ENCODE measurements at regions of chr1 and their contacts with region 1.

Region 1: DNA sequence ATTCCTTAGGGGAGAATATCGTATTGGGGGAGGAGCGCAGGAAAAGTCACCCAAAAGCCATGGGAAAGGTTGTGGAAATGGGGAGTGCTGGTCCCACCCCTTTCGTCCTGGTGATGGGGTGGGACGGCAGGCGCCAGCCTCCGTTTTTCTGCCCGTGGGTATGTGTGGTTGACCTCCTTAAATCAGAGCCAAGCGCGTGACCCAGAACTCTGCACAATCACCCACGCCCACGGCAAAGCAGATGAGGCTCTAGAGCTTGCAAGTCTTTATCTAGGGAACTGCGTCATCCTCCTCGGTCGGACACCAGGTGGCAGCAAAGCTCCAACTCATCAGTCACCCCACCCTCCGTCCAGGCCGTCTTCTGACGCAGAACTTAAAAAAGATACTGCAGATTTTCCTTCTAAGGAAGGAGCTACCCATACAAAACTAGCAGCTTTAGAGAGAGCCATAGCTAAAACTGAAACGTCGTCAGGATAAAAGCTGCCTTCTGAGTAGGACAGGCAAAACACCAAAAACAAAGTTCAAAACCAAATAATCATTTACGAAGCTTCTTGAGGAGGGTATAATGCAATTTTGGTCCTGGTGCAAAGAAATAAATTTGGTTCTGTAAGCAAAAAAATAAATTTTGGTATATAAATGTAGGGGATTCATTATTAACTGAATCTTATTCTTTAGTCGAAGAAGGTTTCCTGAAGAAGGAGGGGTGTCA is 62.0 kb downstream of the TBX19 start:
- DNase-seq: peak; percentile 61
- ATAC-seq: peak; percentile 98
- H3K4me3 ChIP-seq: no peak overlapping the region
- H3K27ac ChIP-seq: no peak overlapping the region
- H3K4me1 ChIP-seq: peaks cover 10% of the 10 kb centered on the region
- H3K27me3 ChIP-seq: no peaks in the 10 kb centered on the region
- CTCF ChIP-seq: peak; percentile 73 to 91 (median 82)
- EP300 ChIP-seq: no peak
- POLR2A ChIP-seq: no peak
- RAD21 ChIP-seq: peak; percentile 86

Region 2: GRCh38 chr1:168121401-168122011 is 221.2 kb before region 1 on chr1:
- CTCF ChIA-PET with region 1: no interaction called
- POLR2A ChIA-PET with region 1: no interaction called
- RAD21 ChIA-PET with region 1: no interaction called
- SMC1A ChIA-PET with region 1: no interaction called
- in situ Hi-C with region 1: no loop called
- intact Hi-C with region 1: no loop called
- DNase-seq: no peak
- ATAC-seq: no peak
- H3K4me3 ChIP-seq: no peak overlapping the region
- H3K27ac ChIP-seq: no peak overlapping the region
- H3K4me1 ChIP-seq: no peaks in the 10 kb centered on the region
- H3K27me3 ChIP-seq: peaks cover 0 to 3% of the 10 kb centered on the region in 2 experiments; a peak in 3 of 4 replicates
- CTCF ChIP-seq: no peak
- EP300 ChIP-seq: no peak
- POLR2A ChIP-seq: no peak
- RAD21 ChIP-seq: no peak

Region 3: DNA sequence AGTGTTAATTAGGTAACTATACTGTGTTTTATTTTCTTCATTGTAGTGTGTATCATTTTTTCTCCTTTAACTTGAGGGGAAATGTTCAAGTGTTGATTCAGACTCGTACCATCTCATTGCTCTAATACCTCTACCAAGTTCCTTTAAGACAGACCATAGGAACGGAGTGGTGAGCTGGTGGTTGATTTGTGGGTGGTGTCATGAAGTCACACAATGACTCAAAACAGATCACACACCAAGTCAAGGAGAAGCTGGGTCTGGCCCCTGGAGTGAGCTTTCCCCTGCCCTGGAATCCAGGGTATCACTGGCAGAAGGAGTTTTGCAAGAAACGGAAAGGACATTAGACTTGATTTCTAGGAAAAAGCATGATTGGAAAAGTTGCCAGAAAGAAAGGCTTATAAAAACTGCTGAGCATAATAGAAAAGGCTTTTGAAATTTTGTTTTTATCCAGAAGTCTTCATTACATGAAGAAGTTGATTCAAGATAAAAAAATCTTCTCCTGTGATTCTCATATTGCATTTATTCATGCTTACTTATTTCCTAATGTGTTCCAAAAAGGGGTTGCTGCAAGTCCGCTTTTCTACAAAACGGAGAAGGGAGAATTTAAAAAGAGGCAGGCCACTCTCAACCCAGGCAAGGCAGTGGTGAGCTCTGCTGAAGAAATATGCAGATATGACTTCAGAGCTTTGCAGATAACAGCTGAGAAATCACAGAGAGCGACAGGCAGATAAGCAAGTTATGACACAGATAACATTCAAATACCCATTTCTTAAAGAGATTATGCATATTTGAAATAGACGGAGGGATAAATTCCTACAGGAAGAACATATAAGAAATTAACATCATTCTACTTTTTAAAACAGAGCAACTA is 17.7 kb after region 1 on chr1:
- CTCF ChIA-PET with region 1: interaction called, 44 read pairs
- POLR2A ChIA-PET with region 1: no interaction called
- RAD21 ChIA-PET with region 1: interaction called, 18 read pairs
- SMC1A ChIA-PET with region 1: interaction called, 21 read pairs
- in situ Hi-C with region 1: no loop called
- intact Hi-C with region 1: no loop called
- DNase-seq: no peak
- ATAC-seq: peak; percentile 51; the same call in 2 of the 3 replicates
- H3K4me3 ChIP-seq: no peak overlapping the region
- H3K27ac ChIP-seq: no peak overlapping the region
- H3K4me1 ChIP-seq: no peaks in the 10 kb centered on the region
- H3K27me3 ChIP-seq: no peaks in the 10 kb centered on the region; a peak in 1 of 4 replicates
- CTCF ChIP-seq: no peak
- EP300 ChIP-seq: no peak
- POLR2A ChIP-seq: no peak
- RAD21 ChIP-seq: no peak

Region 4: DNA sequence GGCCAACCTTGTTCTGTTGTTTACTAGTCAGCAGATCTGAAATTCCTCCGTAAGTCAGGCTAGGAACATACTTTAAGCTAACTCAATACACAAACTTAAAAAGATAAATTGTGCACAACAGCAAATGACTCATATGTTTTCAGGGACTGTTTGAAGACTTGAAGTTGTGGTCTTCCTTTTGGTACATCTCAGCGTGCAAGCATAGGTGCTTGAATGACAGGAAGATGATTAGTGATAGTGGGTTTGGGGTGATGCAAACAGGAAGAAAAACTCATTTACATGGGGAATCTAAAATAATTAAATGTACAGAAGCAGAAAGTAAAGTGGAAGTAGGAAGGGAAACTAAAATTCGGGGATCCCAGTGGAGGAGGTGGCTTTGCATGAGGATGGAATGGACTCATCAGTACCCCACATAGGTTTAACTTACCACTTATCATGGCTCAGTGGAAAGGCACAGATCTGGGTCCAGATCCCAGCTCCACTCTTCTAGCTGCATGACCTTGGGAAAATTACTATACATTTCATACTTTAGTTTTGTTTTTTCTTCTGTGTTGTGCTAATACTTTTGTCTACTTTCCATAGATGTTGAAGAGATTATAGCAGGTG is 78.8 kb after region 1 on chr1:
- CTCF ChIA-PET with region 1: interaction called, 28 read pairs
- POLR2A ChIA-PET with region 1: no interaction called
- RAD21 ChIA-PET with region 1: interaction called, 23 read pairs
- SMC1A ChIA-PET with region 1: interaction called, 27 read pairs
- in situ Hi-C with region 1: no loop called
- intact Hi-C with region 1: no loop called
- DNase-seq: no peak
- ATAC-seq: peak; percentile 74
- H3K4me3 ChIP-seq: no peak overlapping the region
- H3K27ac ChIP-seq: no peak overlapping the region
- H3K4me1 ChIP-seq: no peaks in the 10 kb centered on the region
- H3K27me3 ChIP-seq: no peaks in the 10 kb centered on the region; a peak in 2 of 4 replicates
- CTCF ChIP-seq: no peak
- EP300 ChIP-seq: no peak
- POLR2A ChIP-seq: no peak
- RAD21 ChIP-seq: no peak

Region 5: GRCh38 chr1:168466092-168466713 is 123.5 kb after region 1 on chr1:
- CTCF ChIA-PET with region 1: interaction called, 14 read pairs
- POLR2A ChIA-PET with region 1: no interaction called
- RAD21 ChIA-PET with region 1: interaction called, 10 read pairs
- SMC1A ChIA-PET with region 1: interaction called, 6 read pairs
- in situ Hi-C with region 1: no loop called
- intact Hi-C with region 1: no loop called
- DNase-seq: peak; percentile 88
- ATAC-seq: peak; percentile 89
- H3K4me3 ChIP-seq: peak overlapping the region; percentile 25; the same call in 1 of the 2 replicates
- H3K27ac ChIP-seq: peak overlapping the region; percentile 56
- H3K4me1 ChIP-seq: peaks cover 25% of the 10 kb centered on the region
- H3K27me3 ChIP-seq: no peaks in the 10 kb centered on the region
- CTCF ChIP-seq: no peak
- EP300 ChIP-seq: peak; percentile 23 to 46; a peak in 1 of 4 replicates
- POLR2A ChIP-seq: no peak
- RAD21 ChIP-seq: no peak

Region 6: DNA sequence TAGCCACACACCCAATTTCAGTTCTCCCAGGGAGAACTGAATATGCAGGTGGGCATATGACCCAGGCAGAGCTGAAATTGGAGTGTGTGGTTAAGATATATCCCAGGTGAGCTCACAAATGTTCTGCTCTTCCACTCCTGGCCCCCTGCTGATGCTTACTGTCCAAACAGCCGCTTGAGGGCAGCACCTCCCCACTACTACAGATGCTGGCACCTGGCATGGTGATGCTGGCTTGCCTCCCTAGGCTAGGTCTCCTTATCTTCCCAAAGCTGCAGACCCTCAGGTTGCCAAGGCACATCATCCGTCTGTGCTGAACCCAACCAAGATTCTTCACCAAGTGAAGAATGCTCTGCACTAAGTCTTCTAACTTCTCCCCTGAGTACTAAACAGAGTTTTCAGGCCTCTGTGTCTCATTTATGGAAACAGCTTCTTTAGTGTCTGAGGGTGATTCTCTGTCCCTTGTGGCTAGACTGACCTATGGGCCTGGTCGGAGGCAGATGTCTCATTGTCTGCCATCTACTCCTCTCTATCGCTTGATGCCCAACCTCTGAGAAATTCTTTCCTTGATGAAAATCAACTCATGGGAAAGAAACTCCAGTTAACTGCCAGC is 260.9 kb after region 1 on chr1:
- CTCF ChIA-PET with region 1: interaction called, 82 read pairs
- POLR2A ChIA-PET with region 1: no interaction called
- RAD21 ChIA-PET with region 1: interaction called, 97 read pairs
- SMC1A ChIA-PET with region 1: interaction called, 128 read pairs
- in situ Hi-C with region 1: no loop called
- intact Hi-C with region 1: no loop called
- DNase-seq: peak; percentile 7
- ATAC-seq: peak; percentile 99
- H3K4me3 ChIP-seq: no peak overlapping the region
- H3K27ac ChIP-seq: no peak overlapping the region
- H3K4me1 ChIP-seq: no peaks in the 10 kb centered on the region
- H3K27me3 ChIP-seq: no peaks in the 10 kb centered on the region; a peak in 1 of 4 replicates
- CTCF ChIP-seq: peak; percentile 76 to 92 (median 80)
- EP300 ChIP-seq: no peak
- POLR2A ChIP-seq: no peak
- RAD21 ChIP-seq: peak; percentile 97

Region 7: GRCh38 chr1:169295425-169295824 is 952.7 kb after region 1 on chr1:
- CTCF ChIA-PET with region 1: no interaction called
- POLR2A ChIA-PET with region 1: no interaction called
- RAD21 ChIA-PET with region 1: no interaction called
- SMC1A ChIA-PET with region 1: no interaction called
- in situ Hi-C with region 1: no loop called
- intact Hi-C with region 1: no loop called
- DNase-seq: no peak
- ATAC-seq: no peak
- H3K4me3 ChIP-seq: no peak overlapping the region
- H3K27ac ChIP-seq: no peak overlapping the region
- H3K4me1 ChIP-seq: no peaks in the 10 kb centered on the region
- H3K27me3 ChIP-seq: no peaks in the 10 kb centered on the region
- CTCF ChIP-seq: no peak
- EP300 ChIP-seq: no peak
- POLR2A ChIP-seq: no peak
- RAD21 ChIP-seq: no peak

Region 8: GRCh38 chr1:169546087-169546995 is 1203.6 kb after region 1 on chr1:
- CTCF ChIA-PET with region 1: interaction called, 13 read pairs
- POLR2A ChIA-PET with region 1: no interaction called
- RAD21 ChIA-PET with region 1: interaction called, 6 read pairs
- SMC1A ChIA-PET with region 1: interaction called, 7 read pairs
- in situ Hi-C with region 1: no loop called
- intact Hi-C with region 1: no loop called
- DNase-seq: peak; percentile 40
- ATAC-seq: peak; percentile 92
- H3K4me3 ChIP-seq: no peak overlapping the region
- H3K27ac ChIP-seq: no peak overlapping the region
- H3K4me1 ChIP-seq: no peaks in the 10 kb centered on the region
- H3K27me3 ChIP-seq: no peaks in the 10 kb centered on the region
- CTCF ChIP-seq: peak; percentile 63 to 69 (median 66)
- EP300 ChIP-seq: no peak
- POLR2A ChIP-seq: no peak
- RAD21 ChIP-seq: peak; percentile 75

Measured in GM12878 (cell line).